Naive thymus-derived CD8-positive, alpha-beta T cell (primary cell): ENCODE measurements at regions of chr9 and their contacts with region 1.

Region 1: DNA sequence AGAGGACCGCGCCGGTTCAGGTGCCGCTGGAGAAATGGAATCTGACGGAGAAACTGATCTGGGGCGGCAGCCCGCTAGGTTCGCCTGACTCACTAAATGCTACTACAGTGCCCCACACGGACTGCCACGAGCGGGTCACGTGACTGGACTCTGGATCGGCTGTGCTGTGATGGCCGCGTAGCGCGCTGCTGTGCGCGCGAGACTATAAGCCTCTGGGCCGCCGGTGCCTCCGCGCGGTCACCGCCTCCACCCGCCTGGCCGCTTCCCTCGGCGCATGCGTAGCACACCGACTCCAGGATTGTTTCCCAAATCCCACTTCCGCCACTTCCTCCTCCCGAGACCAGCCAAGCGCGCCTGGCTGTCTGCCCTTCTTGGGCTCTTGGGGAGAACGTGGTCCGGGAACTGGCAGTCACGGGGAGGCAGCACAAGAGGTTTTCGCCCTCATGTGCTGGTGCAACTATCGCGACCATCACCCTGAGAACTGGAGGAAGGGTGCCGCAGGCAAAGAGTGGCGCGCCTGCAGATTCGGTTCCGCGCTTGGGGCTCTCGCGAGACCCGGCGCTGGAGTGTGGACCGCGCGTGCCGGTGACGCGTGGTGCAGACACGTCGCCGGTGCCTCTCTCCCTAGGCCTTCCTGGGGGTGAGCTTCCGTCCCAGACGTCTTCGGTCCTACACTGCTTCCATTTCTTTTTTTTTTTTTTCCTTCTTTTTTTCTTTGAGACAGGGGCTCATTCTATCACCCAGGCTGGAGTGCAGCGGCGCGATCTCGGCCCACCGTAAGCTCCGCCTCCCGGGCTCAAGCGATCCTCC is 35.8 kb upstream of the GLDC start:
- DNase-seq: peak; percentile 82 to 96 (median 90)
- ATAC-seq: peak; percentile 88 to 89
- H3K4me3 Mint-ChIP-seq: peak overlapping the region; percentile 93 to 98 (median 94)
- H3K27ac Mint-ChIP-seq: peak overlapping the region; percentile 98 to 100 (median 99)
- H3K4me1 Mint-ChIP-seq: peaks cover 8 to 34% (median 19%) of the 10 kb centered on the region in 4 donors
- H3K27me3 Mint-ChIP-seq: no peaks in the 10 kb centered on the region

Region 2: GRCh38 chr9:6715755-6716643 is 34.6 kb after region 1 on chr9:
- POLR2A ChIA-PET with region 1: interaction called, 37 read pairs
- DNase-seq: peak; percentile 31 to 87 (median 53)
- ATAC-seq: peak; percentile 92
- H3K4me3 Mint-ChIP-seq: peak overlapping the region; percentile 83 to 93 (median 87)
- H3K27ac Mint-ChIP-seq: peak overlapping the region; percentile 85 to 94 (median 91)
- H3K4me1 Mint-ChIP-seq: peaks cover 5 to 11% (median 8%) of the 10 kb centered on the region in 4 donors
- H3K27me3 Mint-ChIP-seq: no peaks in the 10 kb centered on the region